Heart left ventricle (tissue), 16 donors: ENCODE measurements at regions of chr7 and their contacts with region 1.

Region 1: DNA sequence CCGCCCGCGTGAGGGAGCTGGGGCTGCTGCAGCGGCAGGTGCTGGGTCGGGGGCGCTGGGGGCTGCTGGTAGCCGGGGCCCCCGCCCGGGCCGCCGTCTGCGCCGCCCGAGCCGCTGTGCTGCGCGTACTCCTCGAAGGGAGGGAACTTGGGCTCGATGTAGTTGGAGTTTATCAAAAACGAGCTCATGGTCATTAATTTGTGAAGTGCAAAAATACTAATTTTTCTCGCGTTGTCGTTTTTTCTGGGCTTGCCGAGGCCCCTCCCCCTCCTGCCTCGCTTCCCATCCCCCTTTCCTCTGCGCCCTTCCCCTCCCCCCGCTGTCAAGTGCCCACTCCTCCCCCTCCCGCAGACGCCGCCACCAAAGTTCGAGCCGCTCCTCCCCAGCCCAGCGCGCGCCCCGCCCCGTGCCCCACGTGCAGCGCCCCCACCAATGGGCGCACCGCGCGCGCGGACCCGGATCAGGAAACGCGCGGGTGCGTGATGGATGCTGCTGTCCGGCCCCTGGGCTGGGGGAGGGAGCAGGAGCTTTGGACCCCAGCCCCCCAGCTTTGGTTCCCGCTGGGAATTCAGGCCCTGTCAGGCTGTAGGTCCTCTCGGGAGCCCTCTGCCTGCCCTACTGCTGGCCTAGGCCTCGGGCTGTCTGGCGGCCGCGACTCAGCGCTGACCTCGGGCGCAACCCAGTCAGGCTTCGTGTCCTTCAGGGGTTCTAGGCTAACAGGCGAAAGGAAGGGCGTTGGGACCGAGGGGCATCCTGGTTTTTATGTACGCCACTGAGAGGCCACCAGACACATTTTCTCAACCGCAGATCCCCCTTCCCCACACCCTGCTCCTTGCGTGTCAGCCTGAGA is at the start of gene HOXA4:
- DNase-seq: peak; percentile 75 to 89 (median 78)
- ATAC-seq: peak; percentile 77 to 96 (median 89)
- H3K4me3 ChIP-seq: peak within 1 kb of the TSS; percentile 34 to 67 (median 54)
- H3K27ac ChIP-seq: peak within 1 kb of the TSS; percentile 35 to 89 (median 66)
- H3K4me1 ChIP-seq: peaks cover 0 to 16% (median 0%) of the 10 kb centered on the region in 12 donors
- H3K27me3 ChIP-seq: peaks cover 21 to 97% (median 88%) of the 10 kb centered on the region in 9 donors
- CTCF ChIP-seq: no peak
- POLR2A ChIP-seq: peak in 1 of 2 donors; percentile 56
- total RNA-seq, gene HOXA4: 0.23 to 2.6 (median 0.88) TPM in 8 of 9 donors, not detected in the other

Region 2: GRCh38 chr7:26853788-26854393 is 276.9 kb before region 1 on chr7:
- intact Hi-C with region 1: loop called in 1 of 10 experiments (anchors 2 kb)
- DNase-seq: no peak
- ATAC-seq: no peak
- H3K4me3 ChIP-seq: no peak overlapping the region
- H3K27ac ChIP-seq: no peak overlapping the region
- H3K4me1 ChIP-seq: peaks cover 0 to 7% (median 0%) of the 10 kb centered on the region in 12 donors
- H3K27me3 ChIP-seq: peaks cover 0 to 71% (median 20%) of the 10 kb centered on the region in 9 donors
- CTCF ChIP-seq: peak in 11 of 12 donors; percentile 15 to 64 (median 51)
- POLR2A ChIP-seq: no peak

Region 3: GRCh38 chr7:26864309-26865093 is 266.3 kb before region 1 on chr7 and contains the start of gene SKAP2:
- intact Hi-C with region 1: loop called in 2 of 10 experiments (anchors 5 kb)
- DNase-seq: peak; percentile 95 to 98 (median 95)
- ATAC-seq: peak; percentile 98 to 100 (median 99)
- H3K4me3 ChIP-seq: peak within 1 kb of the TSS; percentile 50 to 90 (median 69)
- H3K27ac ChIP-seq: peak within 1 kb of the TSS; percentile 66 to 96 (median 80)
- H3K4me1 ChIP-seq: peaks cover 0 to 22% (median 0%) of the 10 kb centered on the region in 12 donors
- H3K27me3 ChIP-seq: peaks cover 0 to 76% (median 26%) of the 10 kb centered on the region in 9 donors
- CTCF ChIP-seq: no peak
- POLR2A ChIP-seq: peak in 1 of 2 donors; percentile 90
- total RNA-seq, gene SKAP2: 2.9 to 17.3 (median 6.0) TPM

Region 4: DNA sequence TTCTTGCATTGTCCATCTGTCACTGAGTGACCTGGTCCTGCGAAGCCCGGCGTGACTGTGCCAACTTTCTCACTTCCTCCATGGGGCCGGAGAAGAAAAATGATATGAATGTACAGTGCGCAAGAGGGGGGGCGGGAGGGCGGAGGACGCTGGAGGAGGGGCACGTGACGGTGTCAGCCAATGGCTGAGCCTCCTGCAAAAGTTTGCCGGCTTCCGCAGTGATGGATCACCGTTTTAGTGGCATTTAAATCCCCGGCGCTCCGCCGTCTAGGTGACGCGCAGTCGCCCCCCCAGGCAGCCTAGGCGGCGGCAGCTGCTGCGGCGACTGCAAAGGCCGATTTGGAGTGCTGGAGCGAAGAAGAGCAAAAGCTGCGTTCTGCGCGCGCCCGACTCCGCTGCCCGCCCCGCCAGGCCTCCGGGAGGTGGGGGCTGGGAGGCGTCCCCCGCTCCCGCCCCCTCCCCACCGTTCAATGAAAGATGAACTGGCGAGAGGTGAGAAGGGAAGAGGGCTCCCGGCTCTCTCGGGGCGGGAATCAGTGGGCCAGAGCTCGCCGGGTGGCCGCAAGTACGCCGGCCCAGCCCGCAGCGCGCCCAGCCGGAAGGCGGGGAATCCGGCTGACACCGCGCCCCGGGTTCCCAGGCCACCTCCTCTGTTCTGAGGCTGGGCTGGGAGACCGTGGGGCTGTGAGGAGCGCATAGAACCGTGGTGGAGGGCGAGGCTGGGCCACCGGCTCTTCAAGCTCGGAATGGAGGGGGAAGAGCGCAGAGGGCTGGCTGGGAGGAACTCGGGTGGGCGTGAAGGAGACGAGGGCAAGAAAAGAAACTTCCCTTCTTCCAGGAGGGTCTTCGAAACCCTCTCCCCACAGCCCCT is 34.6 kb before region 1 on chr7 and contains the start of gene HOXA1:
- intact Hi-C with region 1: loop called in 1 of 10 experiments (anchors 5 kb)
- DNase-seq: peak; percentile 43 to 79 (median 66)
- ATAC-seq: peak; percentile 47 to 82 (median 78)
- H3K4me3 ChIP-seq: peak within 1 kb of the TSS; percentile 49 to 85 (median 65)
- H3K27ac ChIP-seq: peak within 1 kb of the TSS; percentile 22 to 93 (median 73)
- H3K4me1 ChIP-seq: peaks cover 0 to 33% (median 15%) of the 10 kb centered on the region in 12 donors
- H3K27me3 ChIP-seq: peaks cover 56 to 100% (median 87%) of the 10 kb centered on the region in 9 donors
- CTCF ChIP-seq: no peak
- POLR2A ChIP-seq: peak in 1 of 2 donors; percentile 56
- total RNA-seq, gene HOXA1: 0.12 to 0.66 (median 0.59) TPM in 3 of 9 donors, not detected in the others

Region 5: DNA sequence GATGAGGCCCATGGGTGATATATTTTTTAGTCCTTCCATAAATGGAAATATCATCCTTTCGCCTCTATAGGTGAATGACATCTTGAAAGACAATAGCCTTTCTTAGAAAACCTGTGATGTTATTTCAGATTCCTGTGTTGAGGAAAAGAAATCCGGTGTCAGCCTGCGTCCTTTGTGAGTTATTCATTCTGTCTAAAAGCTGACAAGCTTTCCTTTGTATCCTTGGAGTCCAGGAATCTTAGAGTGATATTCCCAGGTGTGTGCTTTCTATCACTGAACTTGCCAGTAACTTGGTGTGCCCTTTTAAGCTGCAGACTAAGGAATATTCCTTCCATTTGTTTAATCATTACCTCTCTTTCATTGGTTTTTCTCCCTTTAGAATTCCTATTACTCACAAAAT is 152.8 kb after region 1 on chr7:
- intact Hi-C with region 1: no loop called
- DNase-seq: no peak
- ATAC-seq: no peak
- H3K4me3 ChIP-seq: no peak overlapping the region
- H3K27ac ChIP-seq: no peak overlapping the region
- H3K4me1 ChIP-seq: no peaks in the 10 kb centered on the region
- H3K27me3 ChIP-seq: peaks cover 0 to 20% (median 0%) of the 10 kb centered on the region in 9 donors
- CTCF ChIP-seq: no peak
- POLR2A ChIP-seq: no peak

Region 6: DNA sequence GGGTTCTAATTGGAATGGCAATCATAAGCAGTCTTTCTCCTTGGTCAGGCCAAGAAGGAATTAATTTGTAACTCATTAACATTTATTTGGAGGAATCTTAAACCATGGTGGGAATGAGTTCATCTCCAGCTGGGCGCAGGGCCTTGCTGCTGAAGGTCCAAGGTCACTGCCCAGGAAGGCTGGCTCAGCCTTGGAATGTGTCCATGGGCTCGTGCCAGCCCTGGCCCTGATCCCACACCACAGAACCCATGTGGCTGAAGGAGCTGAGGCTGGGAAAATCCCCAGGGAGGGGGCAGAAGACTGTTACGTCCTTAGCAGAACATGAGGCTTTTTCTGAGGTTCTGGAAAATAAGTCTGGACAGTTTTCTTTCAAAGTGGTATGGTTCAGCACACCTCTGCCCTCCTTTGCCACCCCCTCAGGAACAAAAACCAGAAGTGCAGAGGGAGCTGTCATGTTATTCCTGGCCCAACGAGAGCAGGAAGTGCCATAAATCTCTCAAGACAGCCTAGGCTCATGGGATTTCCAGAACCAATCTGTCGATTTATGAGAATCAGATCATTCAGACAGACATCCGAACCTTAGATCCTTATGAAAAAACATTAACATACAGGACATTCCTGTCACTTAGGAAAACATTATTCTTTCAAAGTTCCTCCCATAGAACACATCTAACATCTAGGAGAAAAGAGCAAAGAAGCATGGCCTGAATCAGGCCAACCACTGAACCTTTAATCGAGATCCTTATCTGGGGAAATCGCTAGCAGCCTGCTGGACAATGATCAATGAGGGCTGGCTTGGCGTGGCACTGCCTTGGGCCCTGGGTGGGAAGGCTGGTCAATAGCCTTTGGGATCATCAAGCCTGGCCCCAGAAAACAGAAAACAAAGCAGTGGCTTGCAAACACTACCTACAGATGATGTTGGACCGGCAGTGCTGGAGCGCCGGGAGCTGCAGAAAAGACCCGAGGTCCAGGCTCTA is 743.5 kb after region 1 on chr7:
- intact Hi-C with region 1: no loop called
- DNase-seq: peak; percentile 50 to 79 (median 62)
- ATAC-seq: peak; percentile 68 to 90 (median 88)
- H3K4me3 ChIP-seq: no peak overlapping the region
- H3K27ac ChIP-seq: peak overlapping the region in 4 of 12 donors; percentile 4 to 25 (median 13)
- H3K4me1 ChIP-seq: peaks cover 0 to 31% (median 16%) of the 10 kb centered on the region in 12 donors
- H3K27me3 ChIP-seq: no peaks in the 10 kb centered on the region
- CTCF ChIP-seq: no peak
- POLR2A ChIP-seq: no peak